ENCODE measurements at regions of chr12 and their contacts with region 1.

Region 1: DNA sequence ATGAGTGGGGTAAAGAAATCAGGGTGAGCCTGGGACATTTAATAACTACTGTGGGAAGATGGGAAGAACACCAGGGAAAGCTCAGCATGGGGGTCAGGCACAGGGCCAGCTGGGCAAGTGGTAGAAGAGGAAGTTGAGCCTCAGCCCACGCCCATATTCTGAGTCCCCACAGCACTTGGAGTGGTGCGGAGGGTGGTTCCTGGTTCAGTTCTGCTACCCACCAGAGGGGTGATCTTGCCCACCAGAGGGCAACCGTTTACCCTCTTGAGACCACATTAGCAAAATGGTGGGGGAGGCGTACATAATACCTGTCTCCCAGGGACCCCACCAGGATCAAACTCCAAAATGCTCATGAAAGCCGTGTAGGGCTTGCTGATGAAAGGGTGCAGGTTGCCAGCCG is 16.8 kb upstream of the ANKRD33 start:
- DNase-seq: no peak
- H3K4me3 ChIP-seq: no peak overlapping the region
- H3K27ac ChIP-seq: no peak overlapping the region
- H3K4me1 ChIP-seq: no peaks in the 10 kb centered on the region
- H3K27me3 ChIP-seq: peaks cover 11% of the 10 kb centered on the region
- CTCF ChIP-seq: no peak
- POLR2A ChIP-seq: no peak

Region 2: GRCh38 chr12:51424662-51425438 is 446.3 kb before region 1 on chr12 and contains the start of gene SLC4A8:
- intact Hi-C with region 1: loop called (anchors 5 kb)
- DNase-seq: peak; percentile 39
- H3K4me3 ChIP-seq: peak within 1 kb of the TSS; percentile 34 to 37
- H3K27ac ChIP-seq: no peak within 1 kb of the TSS
- H3K4me1 ChIP-seq: no peaks in the 10 kb centered on the region
- H3K27me3 ChIP-seq: no peaks in the 10 kb centered on the region
- CTCF ChIP-seq: peak; percentile 43 to 72 (median 56)
- POLR2A ChIP-seq: no peak
- total RNA-seq, gene SLC4A8: 0.50 to 10.5 TPM

Region 3: DNA sequence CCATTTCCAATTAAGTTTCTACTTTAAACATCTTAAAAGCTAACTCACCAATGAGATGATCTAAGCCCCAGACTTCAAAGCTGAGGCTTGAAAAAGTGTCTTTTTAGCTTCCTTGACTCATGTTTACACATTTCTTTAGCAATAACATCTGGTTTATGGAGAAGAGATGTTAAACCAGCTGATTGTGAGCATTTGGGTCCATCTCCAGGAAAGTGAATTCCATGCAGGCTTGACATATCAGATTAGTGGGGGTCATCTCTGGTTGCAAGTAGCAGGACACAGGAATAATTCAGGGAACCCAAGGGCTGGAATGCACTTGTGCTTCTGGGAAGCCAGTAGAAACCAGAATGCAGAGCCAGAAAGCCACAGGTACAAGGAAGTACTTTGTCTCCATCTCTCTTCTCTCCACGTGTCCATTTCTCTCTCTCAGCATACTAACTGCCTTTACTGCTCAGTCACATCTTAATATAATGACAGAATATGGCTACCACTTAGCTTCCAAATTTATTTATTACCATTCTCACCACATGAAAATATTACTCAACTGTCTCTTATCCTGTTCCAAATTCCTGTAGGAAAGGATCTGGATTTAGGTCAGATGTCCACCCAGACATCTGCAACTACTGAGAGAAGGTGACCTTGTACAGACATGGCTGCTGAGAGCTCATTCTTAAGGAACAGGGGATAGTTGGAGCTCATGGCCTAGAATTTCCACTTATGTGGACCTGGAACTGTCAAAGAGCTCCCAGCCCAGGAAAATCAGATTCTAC is 175.7 kb before region 1 on chr12:
- intact Hi-C with region 1: no loop called
- DNase-seq: no peak
- H3K4me3 ChIP-seq: no peak overlapping the region
- H3K27ac ChIP-seq: no peak overlapping the region
- H3K4me1 ChIP-seq: no peaks in the 10 kb centered on the region
- H3K27me3 ChIP-seq: no peaks in the 10 kb centered on the region
- CTCF ChIP-seq: no peak
- POLR2A ChIP-seq: no peak

Region 4: DNA sequence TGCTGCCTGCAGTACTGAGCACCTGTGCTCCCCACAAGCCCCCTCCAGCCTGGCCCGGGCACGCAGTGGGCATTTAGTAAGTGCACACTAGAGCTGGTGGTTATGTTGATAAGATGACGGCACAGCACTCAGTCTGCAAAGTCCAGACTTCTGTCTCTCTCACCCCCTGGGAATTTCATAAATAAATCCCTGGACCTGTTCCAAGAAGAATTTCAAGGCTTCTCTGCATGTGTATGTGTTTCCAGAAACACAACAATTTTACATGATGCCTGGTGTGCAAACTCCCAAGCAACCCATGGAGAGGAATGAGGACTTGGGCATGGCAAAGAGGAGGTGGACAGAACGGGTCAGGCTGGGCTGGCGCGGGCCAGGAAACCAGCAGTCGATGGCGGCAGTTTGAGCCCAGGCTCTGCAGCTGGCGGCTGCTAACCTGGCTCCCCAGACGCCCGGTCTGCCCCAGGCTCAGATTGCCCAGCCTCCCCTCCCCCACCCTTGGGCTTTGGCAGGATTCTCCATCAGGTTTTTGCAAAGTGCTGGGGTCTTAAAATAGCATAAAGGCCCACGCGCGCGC is 70.0 kb after region 1 on chr12:
- intact Hi-C with region 1: no loop called
- DNase-seq: no peak
- H3K4me3 ChIP-seq: no peak overlapping the region
- H3K27ac ChIP-seq: no peak overlapping the region
- H3K4me1 ChIP-seq: no peaks in the 10 kb centered on the region
- H3K27me3 ChIP-seq: no peaks in the 10 kb centered on the region
- CTCF ChIP-seq: no peak
- POLR2A ChIP-seq: no peak

Region 5: DNA sequence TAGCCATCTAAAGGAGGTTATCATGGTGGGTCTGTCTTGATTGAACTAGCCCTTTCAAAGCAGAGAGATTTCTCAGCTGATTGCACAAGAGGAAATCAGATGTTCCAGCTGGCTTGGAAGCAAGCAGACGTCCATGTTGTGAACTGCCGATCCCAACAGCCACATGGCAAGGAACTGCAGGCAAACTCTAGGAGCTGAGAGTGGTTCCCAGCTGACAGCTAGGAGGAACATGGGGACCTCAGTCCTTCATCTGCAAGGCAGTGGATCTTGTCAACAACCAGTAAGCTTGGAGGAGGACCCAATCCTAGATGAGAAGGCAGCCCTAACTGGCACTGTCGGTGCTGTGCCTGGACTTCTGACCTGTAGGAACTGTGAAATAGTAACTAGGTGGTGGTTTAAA is 88.1 kb after region 1 on chr12:
- intact Hi-C with region 1: no loop called
- DNase-seq: no peak
- H3K4me3 ChIP-seq: no peak overlapping the region
- H3K27ac ChIP-seq: peak overlapping the region; percentile 34 to 72
- H3K4me1 ChIP-seq: peaks cover 25% of the 10 kb centered on the region
- H3K27me3 ChIP-seq: no peaks in the 10 kb centered on the region
- CTCF ChIP-seq: no peak
- POLR2A ChIP-seq: no peak

Region 6: DNA sequence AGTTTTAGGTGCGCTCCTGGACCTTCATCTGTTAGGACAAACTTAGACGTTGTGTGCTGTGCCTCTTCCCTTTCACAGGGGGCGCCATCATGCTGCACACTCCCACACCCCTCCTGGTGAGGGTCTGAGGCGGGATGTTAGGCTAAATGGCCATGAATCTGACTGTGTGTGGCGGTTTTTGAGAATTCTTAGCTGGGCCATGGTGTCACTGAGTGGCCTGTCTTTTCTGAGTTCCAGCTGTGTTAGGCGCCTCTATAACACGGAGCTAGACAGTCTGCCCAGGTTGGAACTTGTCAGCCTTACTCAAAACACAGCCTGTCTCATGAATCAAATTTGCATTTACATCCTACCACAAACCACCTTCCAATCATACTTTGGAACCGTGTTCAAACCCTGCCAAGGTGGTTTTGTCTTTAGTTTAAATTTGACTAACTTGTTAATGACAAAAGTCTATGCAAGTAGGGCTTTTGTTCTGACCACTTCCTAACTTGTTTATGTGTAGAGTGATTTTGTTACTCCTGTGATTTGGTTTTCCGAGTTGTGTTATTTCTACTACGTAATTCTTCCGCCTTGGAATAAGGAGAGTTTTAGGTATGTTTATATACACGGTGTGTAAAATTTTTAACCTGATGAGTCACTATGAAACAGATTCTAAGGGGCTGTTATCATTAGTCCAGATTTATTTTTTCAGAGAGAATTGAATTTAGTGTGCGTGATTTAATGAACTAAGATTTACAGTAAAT is 99.9 kb after region 1 on chr12:
- intact Hi-C with region 1: no loop called
- DNase-seq: no peak
- H3K4me3 ChIP-seq: no peak overlapping the region
- H3K27ac ChIP-seq: no peak overlapping the region
- H3K4me1 ChIP-seq: peaks cover 12% of the 10 kb centered on the region
- H3K27me3 ChIP-seq: no peaks in the 10 kb centered on the region
- CTCF ChIP-seq: peak in 1 of 4 experiments; percentile 44
- POLR2A ChIP-seq: no peak

Measured in prostate gland (tissue), 2 donors.